ENCODE measurements at regions of chr5 and their contacts with region 1.

Region 1: DNA sequence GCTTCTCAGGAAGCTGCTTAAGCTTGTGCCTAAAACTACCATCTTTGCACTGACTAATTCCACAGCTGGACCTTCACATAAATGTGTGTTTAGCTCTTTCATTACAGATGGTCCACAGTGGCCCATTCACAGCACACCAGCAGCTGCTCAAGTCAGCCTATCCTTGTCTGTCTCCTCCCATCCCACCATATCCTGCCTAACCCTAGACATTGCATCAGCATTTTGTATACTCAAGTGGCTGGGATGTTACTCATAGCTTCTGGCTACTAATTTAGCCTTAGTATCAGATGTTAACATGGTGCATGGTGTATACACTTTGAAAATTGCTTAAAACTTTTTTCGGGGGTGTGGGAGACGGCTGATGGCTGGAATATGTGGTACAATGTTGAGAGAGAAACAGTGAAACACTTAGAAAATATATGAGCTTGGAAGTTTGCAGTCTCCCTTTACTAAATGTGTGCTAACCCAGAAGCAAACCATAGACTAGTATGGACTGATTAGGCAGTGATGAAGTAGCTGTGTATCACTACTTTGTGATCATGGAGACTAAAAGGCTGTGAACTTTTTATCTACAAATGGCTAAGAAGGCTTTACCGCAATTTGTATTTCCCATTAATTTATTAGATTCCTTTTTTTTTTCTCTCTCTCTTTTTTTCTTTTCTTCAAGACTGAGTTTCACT is 83.1 kb downstream of the JMY start:
- DNase-seq: peak; percentile 95
- H3K4me3 ChIP-seq: no peak overlapping the region
- H3K27ac ChIP-seq: peak overlapping the region; percentile 34
- H3K27me3 ChIP-seq: no peaks in the 10 kb centered on the region
- CTCF ChIP-seq: no peak

Region 2: DNA sequence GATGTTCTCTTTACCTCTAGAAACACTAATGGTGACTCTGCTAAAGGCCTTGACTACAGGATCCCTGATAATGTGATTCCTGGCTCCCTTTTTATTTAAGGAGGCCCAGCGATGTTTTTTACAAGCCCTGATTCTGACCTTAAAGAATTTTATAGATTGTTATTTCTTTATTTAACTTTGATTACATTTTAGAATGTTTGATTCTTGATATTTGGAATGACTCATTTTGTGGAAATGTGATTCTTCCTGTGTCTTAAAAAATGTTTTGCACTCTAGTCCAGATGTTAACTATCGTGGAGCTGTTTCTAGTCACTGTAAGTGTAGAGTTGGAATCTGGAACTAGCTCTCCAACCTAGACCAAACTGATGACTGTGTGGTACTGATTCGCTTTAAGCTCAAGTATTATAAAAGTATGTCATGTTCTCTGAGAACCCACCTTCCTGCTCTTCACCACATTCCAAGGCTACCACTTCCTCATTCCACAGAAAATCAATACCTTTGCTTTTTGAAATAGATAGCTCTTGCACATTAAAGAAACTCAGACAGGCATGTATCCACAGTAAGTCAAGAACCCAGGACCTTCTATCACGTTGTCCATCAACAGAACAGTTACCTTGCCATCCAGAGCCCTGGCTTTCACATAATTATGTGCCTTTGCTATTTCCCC is 17.9 kb before region 1 on chr5:
- CTCF ChIA-PET with region 1: no interaction called
- POLR2A ChIA-PET with region 1: interaction called, 15 read pairs
- DNase-seq: peak; percentile 49
- H3K4me3 ChIP-seq: no peak overlapping the region
- H3K27ac ChIP-seq: peak overlapping the region; percentile 58
- H3K27me3 ChIP-seq: no peaks in the 10 kb centered on the region
- CTCF ChIP-seq: no peak

Region 3: DNA sequence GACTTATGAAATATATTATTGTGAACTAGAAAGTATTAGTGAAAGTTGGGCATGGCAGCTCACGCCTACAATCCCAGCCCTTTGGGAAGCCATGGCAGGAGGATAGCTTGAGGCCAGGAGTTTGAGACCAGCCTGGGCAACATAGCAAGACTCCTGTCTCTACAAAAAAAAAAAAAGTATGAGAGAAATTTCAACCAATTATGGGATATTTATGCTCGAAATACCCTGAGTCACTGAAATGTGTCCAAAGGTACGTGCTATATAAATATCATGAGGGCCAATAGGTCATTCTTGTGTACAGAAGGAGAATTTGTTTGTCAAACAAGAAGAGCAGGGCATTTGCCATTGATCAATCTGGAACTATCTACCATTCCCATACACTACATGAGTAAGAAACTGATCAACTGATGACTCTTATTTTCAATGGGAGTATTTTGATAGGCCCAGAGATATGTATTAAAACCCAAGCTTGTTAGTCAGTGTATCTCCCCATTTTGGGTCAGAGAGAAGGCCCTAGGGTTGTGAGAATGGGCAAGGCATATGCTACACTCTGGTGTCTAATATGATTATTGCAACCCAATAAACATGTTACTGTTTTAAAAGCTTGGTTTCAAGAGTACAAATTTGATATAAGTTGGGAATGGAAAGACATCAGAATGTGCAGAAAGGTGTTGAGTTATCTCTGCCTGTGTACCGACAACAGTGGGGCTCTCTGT is 216.6 kb after region 1 on chr5:
- CTCF ChIA-PET with region 1: interaction called, 10 read pairs
- POLR2A ChIA-PET with region 1: no interaction called
- DNase-seq: no peak
- H3K4me3 ChIP-seq: no peak overlapping the region
- H3K27ac ChIP-seq: no peak overlapping the region
- H3K27me3 ChIP-seq: peaks cover 3% of the 10 kb centered on the region
- CTCF ChIP-seq: peak; percentile 16; the same call in 1 of the 2 replicates

Measured in AG04450 (cell line).